ENCODE measurements at regions of chr4 and their contacts with region 1.

Region 1: DNA sequence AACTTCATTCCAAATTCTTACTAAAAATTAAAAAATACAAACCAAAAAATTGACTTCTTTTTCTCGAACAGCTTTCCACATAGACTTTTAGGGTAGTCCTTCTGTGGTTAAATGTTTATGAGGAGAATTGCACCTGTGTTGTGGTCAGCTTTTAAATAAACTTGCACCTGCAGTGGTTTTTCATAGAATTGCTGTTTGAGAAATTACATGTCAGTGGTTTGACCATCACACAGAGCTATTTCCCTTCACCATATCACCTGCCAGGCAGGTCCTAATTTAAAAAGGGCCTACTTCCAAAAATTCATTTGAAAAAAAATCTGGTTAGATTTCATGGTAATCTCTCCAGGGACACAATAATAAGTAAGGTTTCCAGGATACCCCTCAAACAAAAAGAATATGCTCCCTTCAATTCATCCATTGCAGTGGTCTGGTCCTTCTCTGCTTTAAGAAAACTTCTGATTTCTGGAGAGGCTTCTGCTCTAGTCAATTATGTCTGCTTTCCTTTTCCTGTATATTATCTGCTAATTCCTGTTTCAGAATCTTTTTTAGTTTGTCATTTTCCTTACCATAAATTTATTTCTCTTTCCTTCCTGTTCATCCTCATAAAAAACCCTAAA is 9.8 kb upstream of the UTP3 start:
- DNase-seq: no peak
- ATAC-seq: no peak
- H3K4me3 ChIP-seq: no peak overlapping the region
- H3K4me3 Mint-ChIP-seq: peak overlapping the region in 1 of 3 donors; percentile 1
- H3K27ac ChIP-seq: no peak overlapping the region
- H3K27ac Mint-ChIP-seq: peak overlapping the region; percentile 24 to 53
- H3K4me1 ChIP-seq: peaks cover 2 to 7% of the 10 kb centered on the region in 2 experiments
- H3K4me1 Mint-ChIP-seq: peaks cover 7 to 25% (median 15%) of the 10 kb centered on the region in 3 donors
- H3K27me3 ChIP-seq: no peaks in the 10 kb centered on the region
- H3K27me3 Mint-ChIP-seq: peaks cover 0 to 2% of the 10 kb centered on the region in 2 donors

Region 2: GRCh38 chr4:70839589-70840093 is 161.2 kb after region 1 on chr4 and contains the start of gene GRSF1:
- CTCF ChIA-PET with region 1: interaction called in 1 of 2 experiments, 7 read pairs
- POLR2A ChIA-PET with region 1: interaction called, 4 to 10 read pairs
- DNase-seq: peak; percentile 84 to 97 (median 94)
- ATAC-seq: peak; percentile 89 to 93 (median 90)
- H3K4me3 ChIP-seq: peak within 1 kb of the TSS; percentile 70 to 76
- H3K4me3 Mint-ChIP-seq: peak within 1 kb of the TSS; percentile 93 to 97 (median 97)
- H3K27ac ChIP-seq: peak within 1 kb of the TSS; percentile 74
- H3K27ac Mint-ChIP-seq: peak within 1 kb of the TSS; percentile 96 to 97
- H3K4me1 ChIP-seq: peaks cover 13 to 35% of the 10 kb centered on the region in 2 experiments
- H3K4me1 Mint-ChIP-seq: peaks cover 20 to 46% (median 24%) of the 10 kb centered on the region in 3 donors
- H3K27me3 ChIP-seq: no peaks in the 10 kb centered on the region
- H3K27me3 Mint-ChIP-seq: no peaks in the 10 kb centered on the region
- total RNA-seq, gene GRSF1: 42.6 to 48.8 (median 44.7) TPM